ENCODE measurements at regions of chr11 and their contacts with region 1.

Region 1: DNA sequence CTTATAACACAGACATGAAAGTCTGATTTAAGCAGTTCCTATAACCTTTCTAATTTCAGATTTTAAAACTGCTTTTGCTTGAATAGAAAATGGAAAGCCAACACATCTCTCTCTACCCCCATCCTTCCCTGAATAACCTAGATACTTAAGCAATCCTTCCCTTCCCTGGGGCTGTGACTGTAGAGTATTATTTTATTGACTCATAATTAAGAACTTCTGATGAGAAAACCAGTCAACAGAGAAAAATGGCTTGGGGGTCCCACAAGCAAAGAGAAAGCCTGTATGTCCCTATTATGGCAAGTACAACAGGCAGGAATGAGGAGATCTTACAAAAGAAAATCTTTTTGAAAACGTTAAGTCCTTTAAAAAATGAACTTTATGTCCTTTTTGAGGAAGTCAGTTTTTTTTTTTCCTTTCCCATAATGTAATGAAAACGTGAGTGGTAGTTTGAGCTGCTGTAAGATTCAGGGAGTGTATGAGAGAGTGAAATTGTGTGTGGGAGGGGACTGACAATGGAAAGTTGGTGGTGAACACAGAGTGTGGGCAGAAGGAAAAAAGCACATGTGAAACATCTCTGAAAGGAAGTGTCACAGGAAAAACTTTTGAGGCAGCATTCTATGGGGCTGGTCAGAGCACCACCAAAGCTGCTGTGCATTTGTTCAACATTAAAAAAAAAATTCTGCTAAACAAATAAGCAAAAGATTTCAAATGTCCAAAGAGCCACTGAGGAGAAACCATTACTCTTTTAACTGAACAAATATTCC is 154.6 kb downstream of the MAML2 start:
- DNase-seq: no peak
- H3K4me3 Mint-ChIP-seq: peak overlapping the region; percentile 4
- H3K27ac Mint-ChIP-seq: peak overlapping the region; percentile 74
- H3K4me1 Mint-ChIP-seq: peaks cover 45% of the 10 kb centered on the region
- H3K27me3 Mint-ChIP-seq: no peaks in the 10 kb centered on the region

Region 2: DNA sequence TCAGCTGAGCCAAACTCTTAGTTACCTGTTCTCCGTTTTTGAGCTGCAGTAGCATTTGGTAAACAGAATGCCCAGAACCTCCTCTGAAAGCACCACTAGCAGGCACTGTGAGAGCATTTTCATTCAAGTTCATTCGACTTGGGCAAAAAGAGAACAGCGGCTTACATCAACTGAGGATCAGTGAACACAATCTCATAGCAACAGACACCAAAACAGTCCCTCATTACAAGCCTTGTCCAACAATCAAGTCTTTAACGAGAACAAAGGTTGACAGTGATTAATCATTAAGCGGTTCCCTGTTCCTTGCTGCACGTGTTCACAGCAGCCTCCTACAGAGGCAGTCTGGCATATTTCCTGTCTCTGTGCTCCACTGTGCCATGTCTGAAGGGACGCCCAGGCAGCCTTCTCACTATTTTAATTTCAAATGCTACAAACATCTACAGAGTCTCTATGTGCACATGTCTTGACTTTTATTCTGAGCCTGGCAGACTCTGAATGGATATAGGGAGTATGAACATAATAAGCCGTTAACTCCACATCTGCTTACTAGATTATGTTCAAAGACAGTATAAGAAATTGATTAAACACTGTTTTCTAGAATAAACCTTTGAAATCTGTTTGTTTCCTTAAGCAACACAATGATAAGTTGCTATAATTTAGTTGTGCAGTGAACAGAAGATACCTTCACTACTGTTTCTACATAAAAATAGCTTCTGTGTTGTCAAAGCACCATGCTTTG is 176.2 kb before region 1 on chr11:
- intact Hi-C with region 1: loop called (anchors 1 kb)
- DNase-seq: peak; percentile 20
- H3K4me3 Mint-ChIP-seq: no peak overlapping the region
- H3K27ac Mint-ChIP-seq: peak overlapping the region; percentile 75
- H3K4me1 Mint-ChIP-seq: peaks cover 49% of the 10 kb centered on the region
- H3K27me3 Mint-ChIP-seq: no peaks in the 10 kb centered on the region

Region 3: GRCh38 chr11:96112201-96113128 is 76.0 kb before region 1 on chr11:
- intact Hi-C with region 1: loop called (anchors 2 kb)
- DNase-seq: no peak
- H3K4me3 Mint-ChIP-seq: peak overlapping the region; percentile 50
- H3K27ac Mint-ChIP-seq: peak overlapping the region; percentile 84
- H3K4me1 Mint-ChIP-seq: peaks cover 32% of the 10 kb centered on the region
- H3K27me3 Mint-ChIP-seq: no peaks in the 10 kb centered on the region

Region 4: GRCh38 chr11:96155627-96156378 is 32.6 kb before region 1 on chr11:
- intact Hi-C with region 1: no loop called
- DNase-seq: peak; percentile 41
- H3K4me3 Mint-ChIP-seq: peak overlapping the region; percentile 61
- H3K27ac Mint-ChIP-seq: peak overlapping the region; percentile 94
- H3K4me1 Mint-ChIP-seq: peaks cover 55% of the 10 kb centered on the region
- H3K27me3 Mint-ChIP-seq: no peaks in the 10 kb centered on the region

Region 5: GRCh38 chr11:96207459-96208449 is 19.3 kb after region 1 on chr11:
- intact Hi-C with region 1: loop called (anchors 1 kb)
- DNase-seq: no peak
- H3K4me3 Mint-ChIP-seq: peak overlapping the region; percentile 72
- H3K27ac Mint-ChIP-seq: peak overlapping the region; percentile 95
- H3K4me1 Mint-ChIP-seq: peaks cover 83% of the 10 kb centered on the region
- H3K27me3 Mint-ChIP-seq: no peaks in the 10 kb centered on the region

Region 6: GRCh38 chr11:96254087-96254486 is 65.7 kb after region 1 on chr11:
- intact Hi-C with region 1: loop called (anchors 1 kb)
- DNase-seq: peak; percentile 30
- H3K4me3 Mint-ChIP-seq: peak overlapping the region; percentile 77
- H3K27ac Mint-ChIP-seq: peak overlapping the region; percentile 92
- H3K4me1 Mint-ChIP-seq: peaks cover 75% of the 10 kb centered on the region
- H3K27me3 Mint-ChIP-seq: no peaks in the 10 kb centered on the region

Region 7: GRCh38 chr11:96293598-96294021 is 105.2 kb after region 1 on chr11:
- intact Hi-C with region 1: loop called (anchors 2 kb)
- DNase-seq: no peak
- H3K4me3 Mint-ChIP-seq: no peak overlapping the region
- H3K27ac Mint-ChIP-seq: no peak overlapping the region
- H3K4me1 Mint-ChIP-seq: peaks cover 44% of the 10 kb centered on the region
- H3K27me3 Mint-ChIP-seq: no peaks in the 10 kb centered on the region

Measured in activated T-helper 1 cell treated with anti-CD3 and anti-CD28 coated beads, Interleukin-12 subunit alpha, Interleukin-12 subunit beta, Interleukin-2, Interleukin-4 antibody, amounts not matched to agents 30 ng/mL and 10 ng/mL and 1 ng/mL, durations not matched to agents 14 hours and 24 hours and 36 hours (primary cell).